ENCODE measurements at regions of chr6 and their contacts with region 1.

Region 1: GRCh38 chr6:44489910-44490604 is 102.6 kb downstream of the CDC5L start:
- DNase-seq: peak in 1 of 2 donors; percentile 34
- ATAC-seq: peak; percentile 68 to 86 (median 80)
- H3K4me3 ChIP-seq: no peak overlapping the region
- H3K27ac ChIP-seq: peak overlapping the region in 7 of 10 donors; percentile 37 to 81 (median 64)
- H3K4me1 ChIP-seq: peaks cover 0 to 14% (median 0%) of the 10 kb centered on the region in 9 donors
- H3K27me3 ChIP-seq: peaks cover 0 to 10% (median 0%) of the 10 kb centered on the region in 7 donors
- CTCF ChIP-seq: no peak

Region 2: GRCh38 chr6:44800171-44800783 is 310.2 kb after region 1 on chr6:
- intact Hi-C with region 1: loop called in 1 of 10 experiments (anchors 10 kb)
- DNase-seq: no peak
- ATAC-seq: peak in 4 of 8 donors; percentile 41 to 56 (median 54)
- H3K4me3 ChIP-seq: peak overlapping the region in 2 of 10 donors; percentile 6 to 18
- H3K27ac ChIP-seq: no peak overlapping the region
- H3K4me1 ChIP-seq: peaks cover 0 to 14% (median 0%) of the 10 kb centered on the region in 9 donors
- H3K27me3 ChIP-seq: peaks cover 0 to 10% (median 5%) of the 10 kb centered on the region in 7 donors
- CTCF ChIP-seq: no peak

Region 3: GRCh38 chr6:45916692-45917091 is 1426.6 kb after region 1 on chr6:
- intact Hi-C with region 1: loop called in 1 of 10 experiments (anchors 10 kb)
- DNase-seq: no peak
- ATAC-seq: peak; percentile 28 to 81 (median 56)
- H3K4me3 ChIP-seq: no peak overlapping the region
- H3K27ac ChIP-seq: peak overlapping the region in 7 of 10 donors; percentile 8 to 82 (median 51)
- H3K4me1 ChIP-seq: peaks cover 5 to 32% (median 19%) of the 10 kb centered on the region in 9 donors
- H3K27me3 ChIP-seq: no peaks in the 10 kb centered on the region
- CTCF ChIP-seq: no peak

Measured in heart right ventricle (tissue), 16 donors.